ENCODE measurements at regions of chr3 and their contacts with region 1.

Region 1: DNA sequence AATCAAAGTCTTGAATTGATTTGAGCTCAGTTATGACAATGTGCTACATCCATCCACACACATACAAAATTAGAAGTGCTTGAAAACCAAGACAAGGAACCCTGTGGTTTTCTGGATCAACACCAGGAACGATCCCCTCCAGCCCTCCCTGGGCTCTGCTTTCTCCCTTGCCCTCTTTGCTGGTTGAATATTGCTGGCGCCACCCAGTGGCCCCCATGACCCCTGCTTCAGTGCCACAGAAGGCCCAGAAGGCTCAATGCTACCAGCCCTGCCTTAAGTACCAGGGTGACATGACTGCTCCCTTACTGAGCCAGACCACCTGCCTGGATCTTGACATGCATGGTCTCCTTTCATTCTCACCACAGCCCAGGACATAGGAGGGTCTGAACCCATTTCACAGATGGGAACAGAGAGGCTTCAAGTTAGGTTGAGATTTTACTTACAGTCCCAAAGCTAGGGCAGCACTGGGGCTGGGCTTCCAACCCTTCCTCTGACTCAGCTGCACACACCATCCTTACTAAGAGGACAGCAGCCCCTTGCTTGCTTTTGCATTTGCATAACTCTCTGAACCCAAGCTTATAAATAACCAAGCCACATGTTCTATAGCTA is 15.0 kb downstream of the IL12A start:
- DNase-seq: no peak
- H3K4me3 ChIP-seq: no peak overlapping the region
- CTCF ChIP-seq: peak; percentile 65

Region 2: DNA sequence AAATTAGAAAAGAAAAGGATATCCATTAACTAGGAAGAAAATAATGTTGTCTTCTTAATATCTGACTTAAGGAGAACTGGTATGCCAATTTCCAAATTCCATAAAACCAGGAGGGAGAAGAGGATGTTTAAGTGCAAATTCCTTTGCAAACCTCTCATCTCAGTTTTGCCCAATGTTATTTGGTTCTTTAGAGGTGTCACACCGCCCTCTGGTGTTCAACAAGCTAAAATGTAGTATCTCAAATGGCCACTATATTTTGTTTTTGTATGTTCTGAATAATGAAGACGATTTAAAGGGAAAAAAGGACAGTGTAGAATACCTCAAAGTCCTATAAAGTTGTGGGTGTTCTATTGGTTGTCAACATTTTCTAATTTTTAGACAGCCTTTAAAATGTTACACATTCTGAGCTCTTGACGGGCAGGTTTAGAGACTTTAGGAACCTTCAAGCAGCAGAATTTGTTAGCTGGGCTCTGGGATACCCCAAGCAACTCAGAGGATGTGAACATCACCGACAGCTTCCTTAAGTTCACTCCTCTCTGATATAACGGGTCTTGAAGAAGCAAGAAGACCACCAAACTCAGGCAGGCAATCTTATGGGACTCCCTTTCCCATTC is 743.5 kb before region 1 on chr3:
- CTCF ChIA-PET with region 1: interaction called, 15 read pairs
- POLR2A ChIA-PET with region 1: no interaction called
- DNase-seq: peak; percentile 69
- H3K4me3 ChIP-seq: no peak overlapping the region
- CTCF ChIP-seq: peak; percentile 54

Region 3: DNA sequence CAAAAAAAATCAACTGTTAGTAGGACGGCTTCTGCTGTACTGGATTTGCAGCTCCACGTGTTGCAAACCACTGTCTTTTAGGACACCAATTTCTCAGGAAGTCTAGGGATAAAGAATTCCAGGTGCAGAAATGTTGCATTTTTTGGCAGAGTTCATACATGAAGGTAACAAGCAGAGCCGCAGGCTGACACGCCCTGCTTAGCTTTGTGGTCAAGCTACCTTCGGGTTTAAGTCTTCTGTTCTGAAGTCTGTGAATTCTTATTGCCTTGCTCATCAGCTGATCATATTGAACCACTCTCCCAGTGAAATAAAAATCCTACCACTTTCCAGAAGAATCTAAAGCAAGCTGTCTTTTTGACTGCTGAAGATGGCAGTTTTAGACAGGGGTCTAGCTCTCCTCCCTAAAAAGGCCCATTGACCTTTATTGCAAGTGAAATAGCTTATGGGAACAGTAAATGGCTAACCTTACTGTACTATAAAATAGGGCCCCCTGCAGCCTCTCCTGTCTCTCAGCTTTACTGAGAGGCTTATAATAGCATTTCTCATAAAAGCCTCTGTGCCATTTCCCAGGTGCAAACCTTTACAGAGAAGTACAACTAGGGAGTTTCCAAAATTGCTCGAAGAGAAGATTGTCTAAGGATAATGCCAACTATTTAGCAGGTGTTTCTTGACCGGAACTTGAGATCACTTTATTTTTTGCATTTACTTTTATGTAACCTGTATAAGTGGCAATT is 277.2 kb before region 1 on chr3:
- CTCF ChIA-PET with region 1: no interaction called
- POLR2A ChIA-PET with region 1: no interaction called
- DNase-seq: no peak
- H3K4me3 ChIP-seq: no peak overlapping the region
- CTCF ChIP-seq: no peak

Region 4: GRCh38 chr3:159804726-159805410 is 198.8 kb before region 1 on chr3:
- CTCF ChIA-PET with region 1: interaction called, 11 read pairs
- POLR2A ChIA-PET with region 1: no interaction called
- DNase-seq: no peak
- H3K4me3 ChIP-seq: no peak overlapping the region
- CTCF ChIP-seq: peak; percentile 92

Region 5: GRCh38 chr3:159852821-159853505 is 150.7 kb before region 1 on chr3:
- CTCF ChIA-PET with region 1: interaction called, 13 read pairs
- POLR2A ChIA-PET with region 1: no interaction called
- DNase-seq: no peak
- H3K4me3 ChIP-seq: peak overlapping the region; percentile 43
- CTCF ChIP-seq: no peak

Region 6: DNA sequence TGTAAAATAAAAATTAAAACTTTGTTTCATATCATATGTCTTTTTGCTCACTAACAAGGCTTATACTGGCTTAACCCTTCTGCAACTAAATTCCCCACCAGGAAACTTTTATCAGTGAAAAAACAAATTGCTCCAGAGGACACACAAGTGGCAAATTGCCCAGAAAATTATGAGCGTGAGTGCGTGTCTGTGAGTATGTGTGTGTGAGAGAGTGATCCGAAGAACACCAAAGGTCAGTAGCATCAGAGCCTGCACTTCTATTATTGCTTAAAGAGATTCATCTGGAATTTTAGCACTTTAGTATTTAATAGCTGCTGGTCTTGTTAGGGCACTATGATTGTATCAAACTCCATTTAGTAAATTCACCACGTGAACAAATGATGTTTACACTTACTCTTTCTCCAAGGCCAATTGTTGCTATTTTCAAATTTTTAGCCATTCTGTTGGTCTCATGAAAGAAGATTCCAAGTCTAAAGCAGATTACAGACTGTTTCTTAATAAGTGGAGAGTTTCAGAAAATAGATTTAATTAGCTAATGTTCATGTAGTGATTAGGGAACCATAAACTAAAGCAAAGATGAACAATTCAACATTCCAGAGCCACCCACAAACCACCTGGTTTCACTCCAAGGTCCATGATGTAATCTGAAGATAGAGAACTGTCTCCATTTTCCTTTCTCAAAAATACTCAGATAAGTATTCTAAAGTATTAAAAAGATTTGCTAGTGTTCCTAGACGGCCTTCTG is 106.1 kb before region 1 on chr3:
- CTCF ChIA-PET with region 1: interaction called, 683 read pairs
- POLR2A ChIA-PET with region 1: no interaction called
- DNase-seq: no peak
- H3K4me3 ChIP-seq: no peak overlapping the region
- CTCF ChIP-seq: no peak

Region 7: DNA sequence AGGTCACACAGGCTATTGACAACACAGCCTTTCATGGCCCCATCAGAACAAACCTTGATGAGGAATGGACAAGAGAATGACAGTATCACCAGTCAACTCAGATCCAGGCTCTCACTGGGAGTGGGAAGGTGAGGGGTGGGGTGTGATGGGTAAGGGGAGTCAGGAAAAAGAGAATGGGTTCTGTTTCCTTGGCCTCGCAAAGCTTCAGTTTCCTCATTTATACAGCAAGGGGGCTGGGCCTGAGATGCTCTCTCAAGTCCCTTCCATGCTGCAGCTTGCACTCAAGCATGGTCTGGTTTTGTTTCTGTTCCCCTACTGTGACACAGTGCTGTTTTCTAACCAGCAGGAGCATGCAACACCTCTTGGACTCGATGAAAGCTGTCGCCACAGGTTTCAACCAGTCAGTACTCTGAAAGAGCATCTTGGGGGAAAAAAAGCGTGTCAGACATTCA is 80.7 kb before region 1 on chr3:
- CTCF ChIA-PET with region 1: interaction called, 13 read pairs
- POLR2A ChIA-PET with region 1: no interaction called
- DNase-seq: no peak
- H3K4me3 ChIP-seq: no peak overlapping the region
- CTCF ChIP-seq: no peak

Region 8: GRCh38 chr3:159988617-159989271 is 14.9 kb before region 1 on chr3 and contains the start of gene IL12A:
- CTCF ChIA-PET with region 1: interaction called, 301 read pairs
- POLR2A ChIA-PET with region 1: no interaction called
- DNase-seq: no peak
- H3K4me3 ChIP-seq: peak within 1 kb of the TSS; percentile 66
- CTCF ChIP-seq: peak; percentile 98